CD4-positive, alpha-beta memory T cell (primary cell): ENCODE measurements at regions of chr1 and their contacts with region 1.

Region 1: GRCh38 chr1:193456811-193457280 is 270.4 kb upstream of the B3GALT2 start:
- DNase-seq: peak in 1 of 5 donors; percentile 26
- H3K4me3 ChIP-seq: peak overlapping the region in 1 of 2 donors; percentile 28
- H3K4me3 Mint-ChIP-seq: no peak overlapping the region
- H3K27ac ChIP-seq: peak overlapping the region; percentile 67
- H3K27ac Mint-ChIP-seq: no peak overlapping the region
- H3K4me1 ChIP-seq: peaks cover 77% of the 10 kb centered on the region
- H3K4me1 Mint-ChIP-seq: peaks cover 21 to 33% (median 25%) of the 10 kb centered on the region in 4 donors
- H3K27me3 ChIP-seq: no peaks in the 10 kb centered on the region
- H3K27me3 Mint-ChIP-seq: no peaks in the 10 kb centered on the region

Region 2: DNA sequence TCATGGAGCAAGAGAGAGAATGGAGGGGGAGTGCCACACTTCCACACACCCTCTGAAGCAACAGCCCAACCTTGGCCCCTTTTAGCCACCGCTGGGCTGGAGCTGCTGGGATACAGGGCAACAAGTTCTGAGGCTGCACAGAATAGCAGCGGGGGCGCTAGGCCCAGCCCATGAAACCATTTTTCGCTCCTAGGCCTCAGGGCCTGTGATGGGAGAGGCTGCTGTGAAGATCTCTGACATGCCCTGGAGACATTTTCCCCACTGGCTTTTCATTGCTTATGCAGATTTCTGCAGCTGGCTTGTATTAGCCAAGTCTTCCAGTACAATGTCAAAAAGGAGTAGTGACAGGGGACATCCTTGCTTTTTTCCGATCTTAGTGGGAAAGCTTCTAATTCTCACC is 68.2 kb before region 1 on chr1:
- CTCF ChIA-PET with region 1: no interaction called
- POLR2A ChIA-PET with region 1: no interaction called
- intact Hi-C with region 1: no loop called
- DNase-seq: no peak
- H3K4me3 ChIP-seq: no peak overlapping the region
- H3K4me3 Mint-ChIP-seq: no peak overlapping the region
- H3K27ac ChIP-seq: no peak overlapping the region
- H3K27ac Mint-ChIP-seq: no peak overlapping the region
- H3K4me1 ChIP-seq: no peaks in the 10 kb centered on the region
- H3K4me1 Mint-ChIP-seq: no peaks in the 10 kb centered on the region
- H3K27me3 ChIP-seq: no peaks in the 10 kb centered on the region
- H3K27me3 Mint-ChIP-seq: no peaks in the 10 kb centered on the region

Region 3: GRCh38 chr1:193417945-193418744 is 38.7 kb before region 1 on chr1:
- CTCF ChIA-PET with region 1: no interaction called
- POLR2A ChIA-PET with region 1: interaction called, 117 read pairs
- intact Hi-C with region 1: loop called (anchors 5 kb)
- DNase-seq: peak in 4 of 5 donors; percentile 53 to 62 (median 56)
- H3K4me3 ChIP-seq: peak overlapping the region; percentile 24 to 50
- H3K4me3 Mint-ChIP-seq: peak overlapping the region; percentile 79 to 89 (median 84)
- H3K27ac ChIP-seq: peak overlapping the region; percentile 58
- H3K27ac Mint-ChIP-seq: peak overlapping the region; percentile 76 to 97 (median 92)
- H3K4me1 ChIP-seq: peaks cover 34% of the 10 kb centered on the region
- H3K4me1 Mint-ChIP-seq: peaks cover 32 to 54% (median 36%) of the 10 kb centered on the region in 4 donors
- H3K27me3 ChIP-seq: no peaks in the 10 kb centered on the region
- H3K27me3 Mint-ChIP-seq: no peaks in the 10 kb centered on the region

Region 4: GRCh38 chr1:193486671-193487229 is 29.9 kb after region 1 on chr1:
- CTCF ChIA-PET with region 1: no interaction called
- POLR2A ChIA-PET with region 1: interaction called, 411 read pairs
- intact Hi-C with region 1: no loop called
- DNase-seq: no peak
- H3K4me3 ChIP-seq: no peak overlapping the region
- H3K4me3 Mint-ChIP-seq: peak overlapping the region in 4 of 8 donors; percentile 14 to 49 (median 28)
- H3K27ac ChIP-seq: no peak overlapping the region
- H3K27ac Mint-ChIP-seq: peak overlapping the region; percentile 11 to 84 (median 48)
- H3K4me1 ChIP-seq: peaks cover 14% of the 10 kb centered on the region
- H3K4me1 Mint-ChIP-seq: peaks cover 16 to 34% (median 19%) of the 10 kb centered on the region in 4 donors
- H3K27me3 ChIP-seq: no peaks in the 10 kb centered on the region
- H3K27me3 Mint-ChIP-seq: no peaks in the 10 kb centered on the region

Region 5: DNA sequence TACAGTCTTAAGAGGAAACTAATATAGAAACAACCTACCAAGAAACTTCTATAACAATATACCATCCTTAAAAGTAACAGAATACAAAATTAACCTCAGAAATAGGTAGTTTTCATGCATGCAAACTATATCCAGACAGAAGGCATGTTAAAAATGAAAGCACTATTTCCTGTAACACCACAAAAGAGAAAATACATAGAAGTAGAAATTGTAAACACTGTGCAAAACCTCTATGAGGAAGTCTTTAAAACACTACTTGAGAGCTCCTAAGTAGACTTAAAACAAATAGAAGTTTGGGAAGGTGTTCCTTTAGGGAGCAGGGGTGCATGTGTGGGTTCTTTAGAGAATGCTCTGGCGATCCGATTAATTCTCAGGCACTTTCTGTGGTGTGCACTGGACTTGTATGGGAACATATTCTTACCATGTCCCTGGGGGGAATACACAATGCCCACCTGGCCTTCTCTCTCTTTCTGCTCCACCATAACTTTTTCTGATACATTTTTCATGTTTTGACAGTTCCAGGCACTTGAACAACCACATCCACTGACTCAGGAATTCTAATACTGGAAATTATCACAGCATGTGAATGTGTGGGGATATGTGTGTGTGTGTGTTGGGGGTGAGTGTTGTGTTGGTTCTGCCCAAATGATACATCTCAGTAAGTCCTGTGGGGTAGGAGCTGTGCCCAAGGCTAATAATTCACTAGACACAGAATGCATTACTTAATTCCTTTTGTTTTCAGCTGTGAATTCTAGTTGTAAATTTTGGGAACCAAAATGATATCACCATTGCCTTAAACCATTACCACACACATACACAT is 595.9 kb after region 1 on chr1:
- CTCF ChIA-PET with region 1: no interaction called
- POLR2A ChIA-PET with region 1: interaction called, 5 read pairs
- intact Hi-C with region 1: loop called (anchors 10 kb)
- DNase-seq: peak in 3 of 5 donors; percentile 13 to 34 (median 24)
- H3K4me3 ChIP-seq: no peak overlapping the region
- H3K4me3 Mint-ChIP-seq: peak overlapping the region; percentile 10 to 79 (median 65)
- H3K27ac ChIP-seq: peak overlapping the region; percentile 20
- H3K27ac Mint-ChIP-seq: peak overlapping the region; percentile 50 to 93 (median 90)
- H3K4me1 ChIP-seq: peaks cover 62% of the 10 kb centered on the region
- H3K4me1 Mint-ChIP-seq: peaks cover 55 to 59% (median 58%) of the 10 kb centered on the region in 4 donors
- H3K27me3 ChIP-seq: no peaks in the 10 kb centered on the region
- H3K27me3 Mint-ChIP-seq: no peaks in the 10 kb centered on the region